ENCODE measurements at regions of chr4 and their contacts with region 1.

Region 1: GRCh38 chr4:109214622-109215301 is 87.7 kb downstream of the COL25A1 start:
- DNase-seq: peak; percentile 82
- H3K4me3 ChIP-seq: no peak overlapping the region
- H3K27ac ChIP-seq: peak overlapping the region; percentile 91
- H3K4me1 ChIP-seq: peaks cover 29% of the 10 kb centered on the region
- H3K27me3 ChIP-seq: no peaks in the 10 kb centered on the region
- CTCF ChIP-seq: no peak
- POLR2A ChIP-seq: no peak

Region 2: GRCh38 chr4:109026588-109026987 is 188.2 kb before region 1 on chr4:
- CTCF ChIA-PET with region 1: no interaction called
- POLR2A ChIA-PET with region 1: no interaction called
- dilution Hi-C with region 1: no loop called
- intact Hi-C with region 1: loop called (anchors 5 kb)
- DNase-seq: peak; percentile 56
- H3K4me3 ChIP-seq: peak overlapping the region in 1 of 3 experiments; percentile 46
- H3K27ac ChIP-seq: peak overlapping the region; percentile 86
- H3K4me1 ChIP-seq: peaks cover 23% of the 10 kb centered on the region
- H3K27me3 ChIP-seq: no peaks in the 10 kb centered on the region
- CTCF ChIP-seq: no peak
- POLR2A ChIP-seq: no peak

Region 3: DNA sequence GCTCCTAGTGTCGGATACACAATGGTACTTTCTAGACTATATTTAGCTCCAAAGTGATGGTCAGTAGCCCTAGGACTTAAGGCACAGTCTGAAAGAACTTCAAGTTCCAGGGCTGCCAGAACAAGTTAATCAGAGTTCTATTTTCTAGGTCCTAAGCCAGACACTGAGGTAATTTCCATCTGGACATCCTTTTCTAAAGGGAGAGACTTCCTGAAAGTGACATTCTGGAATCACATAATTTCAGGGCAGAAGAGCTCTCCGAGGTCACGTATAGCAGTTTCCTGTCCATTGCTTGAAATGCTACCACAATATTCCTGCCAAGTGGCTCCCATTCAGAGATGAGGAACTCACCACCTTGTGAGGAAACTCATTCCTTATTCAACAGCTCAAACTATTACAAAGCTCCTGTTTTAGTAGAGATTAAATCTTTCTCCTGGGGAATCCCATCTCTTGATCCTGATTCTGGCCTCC is 30.2 kb before region 1 on chr4:
- CTCF ChIA-PET with region 1: interaction called, 8 read pairs
- POLR2A ChIA-PET with region 1: no interaction called
- dilution Hi-C with region 1: no loop called
- intact Hi-C with region 1: loop called (anchors 1 kb)
- DNase-seq: peak; percentile 78
- H3K4me3 ChIP-seq: no peak overlapping the region
- H3K27ac ChIP-seq: peak overlapping the region; percentile 2
- H3K4me1 ChIP-seq: peaks cover 21% of the 10 kb centered on the region
- H3K27me3 ChIP-seq: no peaks in the 10 kb centered on the region
- CTCF ChIP-seq: no peak
- POLR2A ChIP-seq: no peak

Region 4: DNA sequence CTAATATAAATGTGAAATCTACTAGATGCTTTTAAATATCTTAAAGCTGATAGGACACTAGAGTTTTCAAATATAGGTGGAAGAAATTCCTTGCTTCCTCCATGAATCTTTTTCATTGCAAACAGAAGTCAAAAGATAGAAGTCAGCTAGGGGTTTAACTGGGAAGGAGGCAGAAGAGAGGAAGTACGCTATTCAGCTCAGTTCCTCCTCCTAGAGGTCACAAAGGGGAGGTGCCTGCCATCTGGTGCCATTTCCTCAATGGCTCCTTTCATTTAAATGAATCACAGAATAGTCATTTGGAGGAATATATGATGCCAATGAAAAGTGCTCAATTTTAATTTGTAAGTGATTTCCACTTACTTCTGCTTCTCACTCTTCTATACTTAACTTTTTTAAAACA is 79.2 kb after region 1 on chr4:
- CTCF ChIA-PET with region 1: interaction called, 7 read pairs
- POLR2A ChIA-PET with region 1: no interaction called
- dilution Hi-C with region 1: no loop called
- intact Hi-C with region 1: loop called (anchors 5 kb)
- DNase-seq: no peak
- H3K4me3 ChIP-seq: no peak overlapping the region
- H3K27ac ChIP-seq: no peak overlapping the region
- H3K4me1 ChIP-seq: peaks cover 9% of the 10 kb centered on the region
- H3K27me3 ChIP-seq: no peaks in the 10 kb centered on the region
- CTCF ChIP-seq: peak in 1 of 2 donors; percentile 9
- POLR2A ChIP-seq: no peak

Region 5: DNA sequence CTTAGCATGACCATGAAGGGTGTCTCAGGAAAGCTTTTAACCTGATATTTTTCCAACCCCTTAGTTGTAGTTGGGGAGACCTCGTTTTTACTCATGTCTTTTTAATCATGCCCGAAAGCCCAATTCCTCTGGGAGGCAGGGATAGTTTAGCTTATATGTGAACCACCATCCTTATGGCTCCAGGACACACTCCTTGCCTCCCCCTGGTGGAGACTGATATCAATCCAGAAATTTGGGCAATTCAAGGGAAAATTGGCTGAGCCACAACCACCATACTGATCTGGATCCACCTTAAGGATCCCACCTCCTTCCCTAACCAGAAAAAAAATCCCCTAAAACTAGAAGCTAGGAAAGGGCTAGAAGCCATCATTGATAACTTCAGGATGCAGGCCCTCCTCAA is 101.1 kb after region 1 on chr4:
- CTCF ChIA-PET with region 1: no interaction called
- POLR2A ChIA-PET with region 1: no interaction called
- dilution Hi-C with region 1: no loop called
- intact Hi-C with region 1: no loop called
- DNase-seq: peak; percentile 13
- H3K4me3 ChIP-seq: no peak overlapping the region
- H3K27ac ChIP-seq: no peak overlapping the region
- H3K4me1 ChIP-seq: no peaks in the 10 kb centered on the region
- H3K27me3 ChIP-seq: peaks cover 0 to 2% of the 10 kb centered on the region in 2 experiments
- CTCF ChIP-seq: peak; percentile 27 to 37
- POLR2A ChIP-seq: no peak

Region 6: DNA sequence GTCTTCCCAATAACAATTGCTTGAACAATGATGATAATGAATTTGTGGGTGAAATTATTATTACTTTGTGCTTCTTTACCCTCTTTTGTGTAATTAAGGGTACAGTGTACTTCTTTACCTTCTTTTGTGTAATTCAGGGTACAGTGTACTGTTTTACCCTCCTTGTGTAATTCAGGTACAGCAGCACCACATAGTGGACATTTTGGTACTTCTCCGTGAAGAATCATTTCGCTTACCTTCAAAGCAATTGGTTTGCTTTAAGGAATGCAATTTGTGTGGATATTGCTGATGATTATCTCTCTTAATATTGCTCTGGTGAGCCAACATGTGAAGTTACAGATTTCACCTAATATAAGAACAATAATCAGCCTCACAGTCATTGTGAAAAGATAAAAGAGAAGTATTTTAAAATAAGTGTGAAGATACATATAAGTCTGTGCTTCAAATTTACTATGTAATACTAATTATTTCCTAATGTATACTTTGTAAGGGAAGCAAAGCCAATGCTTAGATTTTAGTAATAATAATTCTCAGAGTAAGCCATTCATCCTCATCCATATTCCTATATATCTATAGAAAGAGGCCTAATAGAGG is 191.7 kb after region 1 on chr4:
- CTCF ChIA-PET with region 1: interaction called, 5 read pairs
- POLR2A ChIA-PET with region 1: no interaction called
- dilution Hi-C with region 1: no loop called
- intact Hi-C with region 1: loop called (anchors 10 kb)
- DNase-seq: peak; percentile 75
- H3K4me3 ChIP-seq: no peak overlapping the region
- H3K27ac ChIP-seq: no peak overlapping the region
- H3K4me1 ChIP-seq: no peaks in the 10 kb centered on the region
- H3K27me3 ChIP-seq: no peaks in the 10 kb centered on the region
- CTCF ChIP-seq: peak; percentile 51 to 53
- POLR2A ChIP-seq: no peak

Measured in endothelial cell of umbilical vein (primary cell).